ENCODE measurements at regions of chr2 and their contacts with region 1.

Region 1: GRCh38 chr2:42663106-42663780 is 94.8 kb downstream of the MTA3 start:
- DNase-seq: peak; percentile 62
- H3K4me3 ChIP-seq: no peak overlapping the region
- H3K27ac ChIP-seq: no peak overlapping the region
- H3K4me1 ChIP-seq: peaks cover 0 to 4% (median 0%) of the 10 kb centered on the region in 4 donors
- H3K27me3 ChIP-seq: no peaks in the 10 kb centered on the region
- CTCF ChIP-seq: peak; percentile 95 to 97 (median 96)
- EP300 ChIP-seq: no peak
- POLR2A ChIP-seq: no peak

Region 2: GRCh38 chr2:42386684-42387083 is 276.6 kb before region 1 on chr2:
- in situ Hi-C with region 1: loop called in 1 of 4 experiments (anchors 25 kb)
- intact Hi-C with region 1: no loop called
- DNase-seq: no peak
- H3K4me3 ChIP-seq: no peak overlapping the region
- H3K27ac ChIP-seq: no peak overlapping the region
- H3K4me1 ChIP-seq: peaks cover 0 to 11% (median 5%) of the 10 kb centered on the region in 4 donors
- H3K27me3 ChIP-seq: no peaks in the 10 kb centered on the region
- CTCF ChIP-seq: peak; percentile 29 to 45 (median 30)
- EP300 ChIP-seq: no peak
- POLR2A ChIP-seq: no peak

Region 3: GRCh38 chr2:42503291-42503690 is 160.0 kb before region 1 on chr2:
- in situ Hi-C with region 1: loop called in 3 of 4 experiments (anchors 5 to 10 kb)
- intact Hi-C with region 1: no loop called
- DNase-seq: no peak
- H3K4me3 ChIP-seq: no peak overlapping the region
- H3K27ac ChIP-seq: no peak overlapping the region
- H3K4me1 ChIP-seq: no peaks in the 10 kb centered on the region
- H3K27me3 ChIP-seq: no peaks in the 10 kb centered on the region
- CTCF ChIP-seq: no peak
- EP300 ChIP-seq: no peak
- POLR2A ChIP-seq: no peak

Region 4: DNA sequence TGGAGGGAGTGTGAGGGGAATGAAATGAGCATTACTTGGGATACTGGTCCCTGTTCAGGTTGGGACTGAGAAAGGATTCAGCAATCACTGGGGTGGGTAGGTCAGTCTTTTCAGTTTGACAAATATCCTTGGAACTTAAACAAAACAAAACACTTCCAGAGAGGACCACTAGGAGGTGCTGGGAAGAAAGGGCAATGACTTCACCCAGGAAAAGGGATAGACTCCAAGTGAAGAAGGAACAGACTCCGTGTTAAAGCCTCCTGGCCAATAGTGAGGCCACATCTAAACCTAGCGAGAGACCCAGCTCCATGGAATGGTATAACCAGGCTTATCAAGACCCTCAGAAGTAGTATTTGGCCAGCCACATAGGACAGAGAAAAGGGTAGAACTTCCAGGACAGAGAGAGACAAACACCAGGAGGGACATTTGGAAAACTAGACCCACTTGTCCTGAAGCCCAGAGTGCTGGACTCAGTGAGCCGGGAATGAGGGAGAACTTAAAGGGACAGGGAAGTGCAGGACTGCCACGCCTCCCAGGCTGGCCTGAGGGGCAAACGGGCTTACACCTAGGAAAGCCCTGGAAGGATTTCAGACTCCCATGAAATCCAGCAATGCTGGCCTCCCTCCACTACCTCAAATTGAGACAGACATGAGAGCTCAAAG is 149.9 kb before region 1 on chr2:
- in situ Hi-C with region 1: loop called (anchors 5 to 10 kb)
- intact Hi-C with region 1: loop called (anchors 5 kb)
- DNase-seq: peak; percentile 34
- H3K4me3 ChIP-seq: no peak overlapping the region
- H3K27ac ChIP-seq: peak overlapping the region in 1 of 4 donors; percentile 35
- H3K4me1 ChIP-seq: peaks cover 0 to 5% (median 4%) of the 10 kb centered on the region in 4 donors
- H3K27me3 ChIP-seq: no peaks in the 10 kb centered on the region
- CTCF ChIP-seq: peak; percentile 67 to 78 (median 70)
- EP300 ChIP-seq: no peak
- POLR2A ChIP-seq: no peak

Measured in transverse colon (tissue), 4 donors.